A549 (cell line): ENCODE measurements at regions of chr2 and their contacts with region 1.

Region 1: DNA sequence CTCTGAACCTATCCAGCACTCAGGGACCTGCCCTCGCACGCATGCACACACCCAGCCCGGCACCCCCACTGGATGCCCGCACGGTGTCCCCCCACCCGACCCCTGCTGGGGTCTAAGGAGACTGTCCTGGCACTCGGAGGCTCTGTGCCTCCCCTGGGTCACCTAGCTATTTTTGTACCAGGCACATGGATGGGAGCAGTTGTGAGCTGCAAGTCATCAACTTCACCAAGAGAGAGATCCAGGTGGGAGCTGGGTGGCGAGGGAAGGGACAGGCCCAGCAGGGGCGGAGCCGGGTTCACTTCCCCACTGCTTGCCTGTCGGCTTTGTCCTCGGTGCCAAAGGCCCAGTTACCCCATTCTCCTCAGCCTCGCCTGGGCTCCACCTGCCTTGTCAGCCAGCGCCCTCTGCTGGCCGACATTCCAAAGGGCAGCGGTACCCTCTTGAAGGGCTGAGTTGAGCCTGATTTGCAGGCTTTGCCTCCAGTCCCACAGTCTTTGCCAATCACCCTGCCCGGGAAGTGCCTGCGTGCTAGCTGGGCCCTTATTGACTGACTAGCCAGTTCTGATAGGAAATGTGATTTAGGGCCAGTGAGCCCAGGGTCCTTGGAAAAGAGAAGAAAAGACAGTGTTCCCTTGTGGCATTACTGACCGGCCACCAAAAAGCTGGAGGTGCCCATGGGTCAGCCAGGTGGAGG is 5.8 kb downstream of the NT5DC4 start:
- DNase-seq: peak; percentile 92 to 93
- ATAC-seq: peak; percentile 84 to 95
- H3K4me3 ChIP-seq: no peak overlapping the region
- H3K27ac ChIP-seq: peak overlapping the region; percentile 81 to 86
- H3K4me1 ChIP-seq: peaks cover 21% of the 10 kb centered on the region
- CTCF ChIP-seq: peak; percentile 97
- EP300 ChIP-seq: no peak
- POLR2A ChIP-seq: no peak
- RAD21 ChIP-seq: peak; percentile 99 to 100

Region 2: DNA sequence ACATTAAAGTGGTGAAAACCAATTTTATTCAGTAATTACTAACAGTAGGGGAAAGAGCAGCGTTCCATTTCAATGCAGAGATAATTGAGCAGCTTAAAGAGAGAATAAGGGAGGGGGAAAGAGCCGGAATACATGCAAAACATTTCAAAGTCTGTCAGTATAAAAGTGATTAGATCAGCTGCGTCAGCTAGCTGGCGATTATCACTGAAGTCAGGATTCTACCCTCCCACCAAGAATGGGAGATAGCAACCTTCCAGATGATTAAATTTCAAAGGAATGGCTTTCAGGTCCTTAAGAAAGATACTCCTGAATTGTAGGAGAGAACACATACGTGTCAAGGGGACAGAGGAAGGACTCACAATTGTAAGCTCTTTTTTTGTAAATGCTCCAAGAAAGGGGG is 454.0 kb before region 1 on chr2:
- CTCF ChIA-PET with region 1: no interaction called
- POLR2A ChIA-PET with region 1: no interaction called
- DNase-seq: no peak
- ATAC-seq: no peak
- H3K4me3 ChIP-seq: no peak overlapping the region
- H3K27ac ChIP-seq: no peak overlapping the region
- H3K4me1 ChIP-seq: 0 out of 3 replicates have a peak, but pooled peaks cover 5% of the 10 kb centered on the region
- CTCF ChIP-seq: no peak
- EP300 ChIP-seq: no peak
- POLR2A ChIP-seq: no peak
- RAD21 ChIP-seq: no peak

Region 3: GRCh38 chr2:112519506-112519905 is 207.1 kb before region 1 on chr2:
- CTCF ChIA-PET with region 1: no interaction called
- POLR2A ChIA-PET with region 1: no interaction called
- DNase-seq: peak in 1 of 2 experiments; percentile 17
- ATAC-seq: no peak
- H3K4me3 ChIP-seq: no peak overlapping the region
- H3K27ac ChIP-seq: 0 out of 6 replicates have a peak overlapping the region, but pooled peaks of 1 of the 2 experiments have one; percentile 7
- H3K4me1 ChIP-seq: no peaks in the 10 kb centered on the region
- CTCF ChIP-seq: no peak
- EP300 ChIP-seq: no peak
- POLR2A ChIP-seq: no peak
- RAD21 ChIP-seq: no peak

Region 4: DNA sequence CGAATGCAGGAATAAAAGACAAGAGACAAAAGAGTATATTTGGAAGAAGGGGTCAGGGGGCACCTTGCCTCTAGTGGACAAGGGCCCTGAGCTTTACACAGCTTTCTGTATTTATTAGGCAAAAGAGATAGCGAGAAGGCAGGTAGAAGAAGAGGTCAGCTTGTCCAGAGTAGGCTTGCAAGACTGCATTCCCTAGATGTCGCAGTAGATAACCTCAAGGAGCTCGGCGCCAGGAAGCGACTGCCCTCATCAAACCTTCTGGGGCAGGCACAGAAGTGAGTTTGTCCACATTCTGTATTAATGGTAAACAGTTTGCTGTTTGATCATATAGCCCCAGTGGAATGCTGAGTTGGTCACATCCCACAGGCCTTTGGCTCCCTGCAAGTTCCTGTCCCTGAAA is 135.3 kb before region 1 on chr2:
- CTCF ChIA-PET with region 1: interaction called, 230 read pairs
- POLR2A ChIA-PET with region 1: no interaction called
- DNase-seq: no peak
- ATAC-seq: no peak
- H3K4me3 ChIP-seq: no peak overlapping the region
- H3K27ac ChIP-seq: no peak overlapping the region
- H3K4me1 ChIP-seq: no peaks in the 10 kb centered on the region
- CTCF ChIP-seq: no peak
- EP300 ChIP-seq: no peak
- POLR2A ChIP-seq: no peak
- RAD21 ChIP-seq: no peak

Region 5: GRCh38 chr2:112645310-112646101 is 81.1 kb before region 1 on chr2 and contains the start of gene SLC20A1:
- CTCF ChIA-PET with region 1: interaction called, 56 read pairs
- POLR2A ChIA-PET with region 1: interaction called, 18 read pairs
- DNase-seq: peak; percentile 81 to 94
- ATAC-seq: peak; percentile 83 to 94
- H3K4me3 ChIP-seq: peak within 1 kb of the TSS; percentile 98
- H3K27ac ChIP-seq: peak within 1 kb of the TSS; percentile 98 to 99
- H3K4me1 ChIP-seq: peaks cover 43% of the 10 kb centered on the region
- CTCF ChIP-seq: peak; percentile 45
- EP300 ChIP-seq: peak in 1 of 2 experiments; percentile 28; a peak in 1 of 5 replicates
- POLR2A ChIP-seq: peak; percentile 95
- RAD21 ChIP-seq: peak; percentile 32 to 53; a peak in 4 of 5 replicates
- polyA plus RNA-seq, gene SLC20A1: 86.8 and 88.7 TPM in 2 replicates

Region 6: DNA sequence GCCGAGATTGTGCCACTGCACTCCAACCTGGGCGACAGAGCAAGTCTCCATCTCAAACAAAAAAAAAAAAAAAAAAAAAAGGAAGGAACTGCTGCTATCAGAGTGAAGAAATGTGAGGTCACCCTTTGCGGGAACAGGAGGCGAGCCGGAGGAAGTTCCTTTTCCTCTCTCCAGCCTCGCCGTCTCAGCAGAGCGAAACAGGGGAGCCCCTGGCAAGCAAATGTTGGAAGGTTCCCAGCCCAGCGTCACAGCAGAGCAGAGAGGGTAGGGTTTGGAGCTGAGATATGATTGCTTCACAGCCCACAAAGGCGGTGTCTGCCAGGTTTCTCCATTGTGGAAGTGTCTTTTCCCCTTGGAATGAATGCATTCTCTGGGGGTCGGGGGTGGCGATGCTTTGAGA is 52.4 kb before region 1 on chr2:
- CTCF ChIA-PET with region 1: interaction called, 82 read pairs
- POLR2A ChIA-PET with region 1: no interaction called
- DNase-seq: no peak
- ATAC-seq: peak in 1 of 2 experiments; percentile 32; a peak in 1 of 6 replicates
- H3K4me3 ChIP-seq: no peak overlapping the region
- H3K27ac ChIP-seq: no peak overlapping the region
- H3K4me1 ChIP-seq: no peaks in the 10 kb centered on the region
- CTCF ChIP-seq: no peak
- EP300 ChIP-seq: no peak
- POLR2A ChIP-seq: no peak
- RAD21 ChIP-seq: no peak

Region 7: DNA sequence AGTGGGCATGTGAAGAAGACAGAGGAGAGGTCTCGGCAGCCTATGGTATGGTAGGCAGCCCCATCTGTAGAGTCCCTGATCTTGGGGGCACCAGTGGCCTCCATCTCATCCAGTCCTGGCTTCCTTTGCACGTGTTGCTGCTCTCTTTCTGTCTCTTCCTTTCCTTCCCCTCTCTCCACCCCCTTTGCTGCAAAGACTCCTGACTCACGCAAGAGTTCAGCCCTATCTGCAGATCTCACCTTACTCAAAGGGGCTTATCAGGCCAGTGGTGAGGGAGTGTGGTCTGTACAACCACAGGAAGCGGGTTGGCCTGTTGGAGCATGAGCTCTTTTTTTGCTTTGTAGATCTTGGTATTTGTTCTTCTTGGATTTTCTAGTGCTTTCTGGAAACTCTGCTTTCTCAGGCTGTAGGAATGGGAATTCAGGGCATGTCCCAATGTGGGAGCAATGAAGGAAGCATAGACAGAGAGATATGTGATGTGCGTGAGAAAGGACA is 20.4 kb before region 1 on chr2:
- CTCF ChIA-PET with region 1: interaction called, 55 read pairs
- POLR2A ChIA-PET with region 1: no interaction called
- DNase-seq: no peak
- ATAC-seq: no peak; a peak in 1 of 6 replicates
- H3K4me3 ChIP-seq: no peak overlapping the region
- H3K27ac ChIP-seq: no peak overlapping the region
- H3K4me1 ChIP-seq: no peaks in the 10 kb centered on the region
- CTCF ChIP-seq: no peak
- EP300 ChIP-seq: no peak
- POLR2A ChIP-seq: no peak
- RAD21 ChIP-seq: no peak

Region 8: DNA sequence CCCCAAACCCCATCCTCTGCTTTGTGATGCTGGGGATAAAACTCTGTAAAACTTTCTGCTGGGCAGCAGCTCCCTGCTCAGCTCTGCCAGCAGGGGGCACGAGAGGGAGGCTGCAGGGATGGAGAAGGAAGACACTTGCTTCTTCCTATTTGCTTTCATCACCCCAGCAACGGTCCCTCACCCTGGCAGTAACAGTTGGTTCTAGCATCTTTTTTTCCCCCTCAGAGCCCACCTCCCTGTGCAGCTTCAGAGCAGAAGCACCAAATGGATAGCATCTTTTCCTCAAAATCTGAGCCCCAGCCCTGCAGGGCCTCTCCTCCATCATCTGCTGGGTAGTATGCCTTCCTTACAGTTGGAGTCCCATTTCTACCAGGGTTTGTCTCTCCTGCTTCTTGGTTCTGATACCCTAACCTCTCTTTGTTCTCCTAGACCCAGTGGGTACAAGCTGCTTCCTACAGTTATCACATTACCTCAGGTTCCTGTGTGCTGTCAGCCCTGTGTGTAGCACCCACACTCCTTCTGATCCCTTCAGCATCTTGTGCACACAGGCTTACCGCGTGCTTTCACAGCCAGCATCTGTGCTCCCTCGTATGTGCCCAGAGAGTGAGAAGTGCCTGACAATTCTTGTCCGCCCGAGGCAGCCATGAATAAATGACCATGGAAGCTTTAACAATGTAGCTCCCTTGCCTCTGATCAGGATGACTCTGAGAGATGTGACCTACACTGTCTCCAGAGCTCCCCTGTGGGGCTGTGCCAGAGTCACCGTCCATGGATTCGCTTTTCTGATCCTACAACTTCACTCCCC is 23.3 kb after region 1 on chr2:
- CTCF ChIA-PET with region 1: interaction called, 33 read pairs
- POLR2A ChIA-PET with region 1: no interaction called
- DNase-seq: peak; percentile 58 to 74
- ATAC-seq: peak; percentile 97 to 98
- H3K4me3 ChIP-seq: no peak overlapping the region
- H3K27ac ChIP-seq: peak overlapping the region in 1 of 2 experiments; percentile 44; a peak in 1 of 6 replicates
- H3K4me1 ChIP-seq: peaks cover 17% of the 10 kb centered on the region
- CTCF ChIP-seq: peak; percentile 97
- EP300 ChIP-seq: no peak
- POLR2A ChIP-seq: no peak
- RAD21 ChIP-seq: peak; percentile 86 to 88

Region 9: DNA sequence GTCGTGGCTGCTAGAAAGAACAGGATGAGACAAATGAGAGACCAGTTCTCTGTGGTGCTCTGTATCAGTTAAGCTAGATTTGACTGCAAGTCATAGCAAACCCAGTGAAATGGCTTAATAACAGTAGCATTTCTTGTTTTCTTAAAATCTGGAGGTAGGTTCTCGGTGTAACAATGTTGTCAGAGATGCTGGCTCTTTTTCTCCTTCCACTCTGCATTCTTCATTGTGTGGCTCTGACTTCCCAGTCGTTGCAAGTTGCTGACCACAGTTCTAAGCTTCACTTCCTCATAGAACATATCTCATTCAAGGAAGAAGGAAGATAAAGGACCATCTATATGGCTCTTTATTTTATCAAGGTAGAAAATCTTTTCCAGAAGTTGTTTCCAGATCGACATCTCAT is 45.7 kb after region 1 on chr2:
- CTCF ChIA-PET with region 1: no interaction called
- POLR2A ChIA-PET with region 1: no interaction called
- DNase-seq: no peak
- ATAC-seq: no peak
- H3K4me3 ChIP-seq: no peak overlapping the region
- H3K27ac ChIP-seq: no peak overlapping the region
- H3K4me1 ChIP-seq: peaks cover 9% of the 10 kb centered on the region; the same call in 2 of the 3 replicates
- CTCF ChIP-seq: no peak
- EP300 ChIP-seq: no peak
- POLR2A ChIP-seq: no peak
- RAD21 ChIP-seq: no peak

Region 10: GRCh38 chr2:113105047-113105785 is 378.6 kb after region 1 on chr2:
- CTCF ChIA-PET with region 1: no interaction called
- POLR2A ChIA-PET with region 1: no interaction called
- DNase-seq: peak; percentile 26 to 36
- ATAC-seq: peak; percentile 76 to 83; a peak in 5 of 6 replicates
- H3K4me3 ChIP-seq: no peak overlapping the region
- H3K27ac ChIP-seq: peak overlapping the region in 1 of 2 experiments; percentile 34; a peak in 1 of 6 replicates
- H3K4me1 ChIP-seq: no peaks in the 10 kb centered on the region
- CTCF ChIP-seq: no peak
- EP300 ChIP-seq: no peak
- POLR2A ChIP-seq: no peak
- RAD21 ChIP-seq: no peak